IMR-90 (cell line): ENCODE measurements at regions of chr1 and their contacts with region 1.

Region 1: DNA sequence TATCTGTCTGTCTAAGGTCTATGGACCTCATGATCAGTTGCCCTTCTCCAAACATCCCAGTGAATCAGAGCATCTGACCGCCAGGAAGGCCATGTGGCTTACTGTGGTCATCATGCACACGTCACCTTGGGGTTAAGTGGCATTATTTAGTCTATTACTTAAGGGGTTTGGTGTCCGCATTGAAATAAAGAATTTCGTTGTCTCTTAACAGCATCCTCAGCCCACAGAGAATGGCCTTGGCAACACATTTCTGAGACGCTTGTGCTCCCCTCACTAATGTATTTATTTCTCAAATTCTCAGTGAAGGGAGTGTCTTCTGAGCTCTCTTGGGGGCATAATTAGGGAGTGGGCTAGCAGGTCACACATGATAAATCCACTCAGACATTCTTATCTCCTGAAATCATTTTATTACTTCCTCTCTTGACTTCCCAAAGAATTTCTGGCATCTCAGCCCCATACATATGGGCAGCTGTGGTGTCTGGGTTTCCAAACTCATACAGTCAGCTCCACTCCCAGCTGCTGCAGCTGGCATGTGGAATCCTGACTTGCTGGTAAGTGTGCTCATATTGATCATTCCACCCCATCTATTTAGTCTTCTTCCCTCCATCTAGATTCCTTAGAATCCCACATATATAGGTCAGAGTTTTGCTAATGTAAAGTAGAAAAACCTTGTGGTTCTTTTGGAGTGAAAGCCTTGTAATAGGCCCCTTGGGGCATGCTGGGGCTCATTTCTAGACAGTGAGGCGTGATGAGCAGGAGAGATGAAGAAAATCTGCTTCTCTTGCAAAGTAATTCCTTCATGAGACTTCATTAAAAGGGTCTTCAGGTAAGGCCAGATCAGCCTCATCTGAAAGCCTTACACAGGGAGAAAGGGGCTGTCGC is 110.5 kb downstream of the HHAT start:
- DNase-seq: peak; percentile 98
- ATAC-seq: peak; percentile 89
- H3K4me3 ChIP-seq: no peak overlapping the region
- H3K27ac ChIP-seq: peak overlapping the region; percentile 93
- H3K4me1 ChIP-seq: peaks cover 20% of the 10 kb centered on the region
- H3K27me3 ChIP-seq: no peaks in the 10 kb centered on the region
- CTCF ChIP-seq: no peak
- POLR2A ChIP-seq: no peak
- RAD21 ChIP-seq: no peak

Region 2: GRCh38 chr1:210407207-210407886 is 31.8 kb before region 1 on chr1:
- CTCF ChIA-PET with region 1: interaction called, 4 read pairs
- POLR2A ChIA-PET with region 1: no interaction called
- dilution Hi-C with region 1: no loop called
- in situ Hi-C with region 1: no loop called
- intact Hi-C with region 1: loop called (anchors 2 kb)
- DNase-seq: peak; percentile 56
- ATAC-seq: peak; percentile 95
- H3K4me3 ChIP-seq: no peak overlapping the region
- H3K27ac ChIP-seq: no peak overlapping the region
- H3K4me1 ChIP-seq: no peaks in the 10 kb centered on the region
- H3K27me3 ChIP-seq: no peaks in the 10 kb centered on the region
- CTCF ChIP-seq: peak; percentile 98
- POLR2A ChIP-seq: no peak
- RAD21 ChIP-seq: peak; percentile 94

Region 3: DNA sequence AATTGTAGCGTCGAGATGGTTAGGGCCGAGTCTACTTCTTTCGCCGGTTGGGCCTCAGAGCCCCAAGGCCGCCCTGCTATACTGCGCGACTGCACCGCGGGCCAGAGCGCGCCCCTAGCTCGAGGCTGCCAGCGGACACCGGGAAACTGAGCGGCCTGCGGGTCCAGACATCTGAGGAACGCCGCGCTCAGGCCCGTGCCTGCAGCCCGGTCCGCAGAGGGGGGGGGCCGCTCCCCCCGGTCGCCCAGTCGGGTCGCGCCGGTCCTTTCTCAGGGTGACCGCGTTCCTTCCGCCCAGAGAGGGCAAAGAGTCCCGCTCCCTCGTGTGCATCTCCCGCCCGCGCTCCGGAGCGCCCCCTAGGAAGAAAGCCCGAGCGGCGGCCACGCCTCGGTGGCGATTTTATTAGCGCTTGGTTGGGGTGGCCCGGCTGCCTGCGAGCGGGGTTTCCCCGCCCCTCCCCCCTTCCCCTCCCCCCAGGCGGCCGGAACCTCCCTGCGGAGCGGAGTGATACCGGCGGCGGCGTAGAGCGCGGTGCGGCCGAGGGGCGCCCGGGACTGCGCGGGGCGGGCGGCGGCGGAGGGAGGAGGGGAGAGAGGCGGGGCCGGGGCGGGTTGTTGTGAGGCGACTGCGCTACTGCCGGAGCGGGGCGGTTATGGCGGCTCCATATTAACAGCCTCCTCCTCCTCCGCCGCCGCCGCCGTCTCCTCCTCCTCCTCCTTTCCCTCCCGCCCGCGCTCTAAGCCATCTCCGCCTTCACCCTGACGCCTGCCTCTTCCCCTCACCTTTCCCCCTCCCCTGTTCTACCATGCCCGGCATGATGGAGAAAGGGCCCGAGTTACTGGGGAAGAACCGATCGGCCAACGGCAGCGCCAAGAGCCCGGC is 819.8 kb after region 1 on chr1 and contains the start of gene RCOR3:
- CTCF ChIA-PET with region 1: no interaction called
- POLR2A ChIA-PET with region 1: interaction called, 4 read pairs
- dilution Hi-C with region 1: no loop called
- in situ Hi-C with region 1: no loop called
- intact Hi-C with region 1: loop called (anchors 2 kb)
- DNase-seq: peak; percentile 87
- ATAC-seq: peak; percentile 86
- H3K4me3 ChIP-seq: peak within 1 kb of the TSS; percentile 100
- H3K27ac ChIP-seq: peak within 1 kb of the TSS; percentile 100
- H3K4me1 ChIP-seq: peaks cover 2% of the 10 kb centered on the region; the same call in 1 of the 2 replicates
- H3K27me3 ChIP-seq: no peaks in the 10 kb centered on the region
- CTCF ChIP-seq: peak; percentile 56
- POLR2A ChIP-seq: no peak; the same call in 1 of the 2 replicates
- RAD21 ChIP-seq: no peak
- total RNA-seq, gene RCOR3: 8.1 and 11.9 TPM in 2 replicates